Left ventricle myocardium inferior (tissue), 1 donor: ENCODE measurements at regions of chr11 and their contacts with region 1.

Region 1: GRCh38 chr11:93219440-93219839 is 21.6 kb upstream of the SLC36A4 start:
- DNase-seq: no peak
- H3K4me3 ChIP-seq: no peak overlapping the region
- H3K27ac ChIP-seq: no peak overlapping the region
- H3K4me1 ChIP-seq: no peaks in the 10 kb centered on the region
- H3K27me3 ChIP-seq: no peaks in the 10 kb centered on the region
- CTCF ChIP-seq: no peak

Region 2: DNA sequence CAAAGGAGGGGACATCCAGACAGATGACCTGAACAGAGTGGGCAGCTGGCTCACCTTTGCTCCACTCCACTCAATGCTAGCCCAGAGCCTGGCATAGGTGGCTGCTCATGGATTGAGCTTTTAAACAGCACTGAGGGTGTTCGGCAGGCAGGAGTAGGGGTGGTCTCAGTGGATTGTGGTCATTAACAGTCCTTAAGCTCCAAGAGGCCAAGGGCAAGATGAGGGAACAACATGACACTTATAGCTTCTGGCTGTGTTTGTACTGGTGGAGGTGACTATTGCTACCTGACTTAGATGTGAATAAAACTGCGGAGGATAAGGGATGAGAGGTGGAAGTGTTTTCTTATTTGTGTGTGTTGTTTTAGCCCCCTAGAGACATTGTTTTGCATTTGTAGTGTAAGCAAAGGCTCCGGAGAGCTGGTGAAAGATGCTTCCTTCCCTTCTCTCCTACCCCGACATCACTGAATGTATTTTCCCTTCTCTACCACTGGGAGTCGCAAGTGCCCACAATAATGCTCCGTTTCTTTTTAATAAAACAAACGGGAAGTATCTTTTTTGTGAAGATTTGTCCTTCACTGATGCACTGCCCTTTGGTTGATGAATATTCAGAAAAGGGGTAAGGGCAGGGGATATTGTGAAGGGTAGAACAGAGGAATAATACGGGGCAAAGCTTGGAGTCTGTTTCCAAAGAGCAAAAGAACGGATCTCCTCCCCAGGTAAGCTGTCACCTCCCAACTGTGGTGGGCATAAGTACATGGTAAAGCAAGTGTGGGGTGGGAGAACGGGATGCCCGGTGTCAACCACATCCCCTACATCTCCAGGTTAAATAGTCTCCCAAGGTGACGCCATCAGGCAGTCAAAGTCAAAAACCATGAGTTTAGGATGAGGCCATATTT is 277.5 kb before region 1 on chr11:
- intact Hi-C with region 1: loop called (anchors 10 kb)
- DNase-seq: no peak
- H3K4me3 ChIP-seq: no peak overlapping the region
- H3K27ac ChIP-seq: no peak overlapping the region
- H3K4me1 ChIP-seq: no peaks in the 10 kb centered on the region
- H3K27me3 ChIP-seq: peaks cover 16% of the 10 kb centered on the region
- CTCF ChIP-seq: peak; percentile 61

Region 3: GRCh38 chr11:93267383-93267782 is 47.9 kb after region 1 on chr11:
- intact Hi-C with region 1: no loop called
- DNase-seq: no peak
- H3K4me3 ChIP-seq: no peak overlapping the region
- H3K27ac ChIP-seq: no peak overlapping the region
- H3K4me1 ChIP-seq: no peaks in the 10 kb centered on the region
- H3K27me3 ChIP-seq: no peaks in the 10 kb centered on the region
- CTCF ChIP-seq: no peak